Right ventricle myocardium superior (tissue), 1 donor: ENCODE measurements at regions of chr9 and their contacts with region 1.

Region 1: GRCh38 chr9:130235897-130236668 is 29.5 kb upstream of the HMCN2 start:
- DNase-seq: peak; percentile 85
- ATAC-seq: peak; percentile 74

Region 2: DNA sequence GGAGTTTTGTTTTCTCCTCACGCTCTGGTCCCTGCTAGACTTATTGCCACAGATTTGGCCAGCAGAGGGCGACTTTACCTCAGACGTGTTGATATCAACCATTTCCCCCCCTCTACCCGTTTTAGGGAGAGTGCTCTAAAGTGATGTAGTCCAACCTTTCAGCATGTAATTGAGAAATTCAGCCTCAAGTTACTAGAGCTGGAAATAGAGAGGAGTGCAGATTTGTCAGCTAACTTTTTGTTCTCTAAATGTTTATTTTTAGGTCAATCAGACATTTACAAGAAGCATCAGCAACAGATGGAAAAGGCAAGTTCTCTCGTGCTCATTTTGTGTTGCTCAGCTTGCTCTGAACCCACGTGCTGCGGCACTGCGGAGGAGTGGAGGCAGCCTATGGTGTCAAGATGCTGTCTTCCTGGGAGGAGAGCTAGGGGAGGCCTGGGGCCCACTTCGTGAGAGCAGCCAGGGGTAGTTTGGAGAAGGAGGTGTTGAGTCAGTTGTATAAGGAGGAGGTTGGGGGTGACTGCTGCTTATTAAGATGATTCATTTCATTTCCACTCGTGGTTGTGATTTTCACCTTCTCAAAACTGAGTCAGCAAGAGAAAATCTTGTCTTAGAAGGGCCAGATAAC is 128.7 kb before region 1 on chr9:
- intact Hi-C with region 1: loop called (anchors 2 kb)
- DNase-seq: peak; percentile 89
- ATAC-seq: peak; percentile 83

Region 3: DNA sequence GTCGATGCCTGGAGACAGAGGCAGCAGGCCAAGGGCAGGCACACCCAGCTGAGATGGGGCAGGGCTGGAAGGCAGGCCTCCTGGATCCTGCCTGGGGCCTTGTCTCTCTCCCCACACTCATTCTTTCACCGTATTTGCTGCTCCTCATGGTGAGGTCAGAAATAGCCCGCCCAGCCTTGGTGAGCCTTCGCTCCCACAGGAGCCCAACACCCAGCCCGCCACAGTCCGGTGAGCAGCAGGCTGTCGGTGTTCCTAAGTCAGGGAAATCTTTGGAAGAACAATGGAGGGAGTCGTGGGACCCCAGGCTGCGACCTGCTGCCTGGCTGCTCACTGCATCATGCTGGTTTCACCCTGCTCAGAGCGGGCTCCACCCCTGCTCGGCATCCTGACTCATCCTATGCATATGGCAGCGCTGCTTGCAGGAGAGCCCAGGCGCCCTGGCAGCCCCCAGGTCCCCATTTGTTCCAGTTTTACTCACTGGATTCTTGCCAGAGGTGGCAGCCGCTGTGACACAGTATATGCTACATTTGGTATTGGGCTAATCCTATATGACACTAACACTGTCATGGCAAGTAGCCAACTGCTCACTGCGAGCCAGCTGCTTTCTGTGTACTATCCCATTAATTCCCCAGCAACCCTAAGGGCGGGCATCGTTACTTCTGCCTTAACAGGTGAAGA is 117.1 kb before region 1 on chr9:
- intact Hi-C with region 1: no loop called
- DNase-seq: no peak
- ATAC-seq: no peak